ENCODE measurements at regions of chr7 and their contacts with region 1.

Region 1: GRCh38 chr7:77674878-77675277 is 21.4 kb upstream of the RSBN1L start:
- DNase-seq: peak in 1 of 2 experiments; percentile 29
- ATAC-seq: peak; percentile 64 to 72
- H3K4me3 ChIP-seq: no peak overlapping the region
- H3K27ac ChIP-seq: no peak overlapping the region
- H3K4me1 ChIP-seq: peaks cover 10% of the 10 kb centered on the region
- CTCF ChIP-seq: no peak
- EP300 ChIP-seq: no peak
- POLR2A ChIP-seq: no peak
- RAD21 ChIP-seq: no peak

Region 2: GRCh38 chr7:77600952-77601351 is 73.9 kb before region 1 on chr7:
- CTCF ChIA-PET with region 1: no interaction called
- POLR2A ChIA-PET with region 1: no interaction called
- DNase-seq: no peak
- ATAC-seq: no peak
- H3K4me3 ChIP-seq: no peak overlapping the region
- H3K27ac ChIP-seq: no peak overlapping the region
- H3K4me1 ChIP-seq: peaks cover 12% of the 10 kb centered on the region; the same call in 2 of the 3 replicates
- CTCF ChIP-seq: no peak
- EP300 ChIP-seq: no peak
- POLR2A ChIP-seq: no peak
- RAD21 ChIP-seq: no peak

Region 3: DNA sequence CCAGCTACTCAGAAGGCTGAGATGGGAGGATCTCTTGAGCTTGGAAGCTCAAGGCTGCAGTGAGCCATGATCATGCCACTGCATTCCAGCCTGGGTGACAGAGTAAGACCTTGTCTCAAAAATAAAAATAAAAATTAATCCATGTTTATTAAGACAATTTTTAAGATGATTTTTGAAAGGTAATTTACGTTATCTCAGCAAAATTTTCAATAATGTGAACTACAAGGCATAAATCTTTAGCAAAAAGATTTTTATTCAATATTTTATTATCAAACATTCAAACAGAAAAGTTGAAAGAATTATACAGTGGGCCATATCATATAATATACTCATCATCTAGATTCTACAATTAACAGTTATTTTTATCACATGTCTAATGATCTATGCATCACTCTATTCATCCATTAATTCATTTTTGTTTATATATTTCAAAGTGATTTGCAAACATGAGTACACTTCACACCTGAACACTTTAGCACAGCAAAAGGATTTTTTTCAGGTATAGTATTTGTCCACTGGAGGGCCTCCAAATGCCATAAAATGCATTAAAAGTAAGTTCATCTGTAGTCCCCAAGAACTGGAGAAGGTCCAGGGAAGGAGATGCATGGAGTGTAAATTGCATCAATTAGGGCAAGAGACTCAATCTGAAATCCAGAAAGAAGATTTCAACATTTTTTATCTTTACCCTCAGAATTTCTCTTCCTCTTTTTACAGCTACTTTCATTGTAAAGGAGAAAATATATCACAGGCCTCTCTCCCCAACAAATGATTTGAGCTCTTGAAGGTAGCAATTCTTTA is 17.3 kb before region 1 on chr7:
- CTCF ChIA-PET with region 1: interaction called, 14 read pairs
- POLR2A ChIA-PET with region 1: no interaction called
- DNase-seq: peak; percentile 32 to 46
- ATAC-seq: peak; percentile 59 to 77; a peak in 4 of 6 replicates
- H3K4me3 ChIP-seq: no peak overlapping the region
- H3K27ac ChIP-seq: no peak overlapping the region
- H3K4me1 ChIP-seq: no peaks in the 10 kb centered on the region
- CTCF ChIP-seq: peak; percentile 76
- EP300 ChIP-seq: no peak
- POLR2A ChIP-seq: no peak
- RAD21 ChIP-seq: peak; percentile 78 to 81

Region 4: DNA sequence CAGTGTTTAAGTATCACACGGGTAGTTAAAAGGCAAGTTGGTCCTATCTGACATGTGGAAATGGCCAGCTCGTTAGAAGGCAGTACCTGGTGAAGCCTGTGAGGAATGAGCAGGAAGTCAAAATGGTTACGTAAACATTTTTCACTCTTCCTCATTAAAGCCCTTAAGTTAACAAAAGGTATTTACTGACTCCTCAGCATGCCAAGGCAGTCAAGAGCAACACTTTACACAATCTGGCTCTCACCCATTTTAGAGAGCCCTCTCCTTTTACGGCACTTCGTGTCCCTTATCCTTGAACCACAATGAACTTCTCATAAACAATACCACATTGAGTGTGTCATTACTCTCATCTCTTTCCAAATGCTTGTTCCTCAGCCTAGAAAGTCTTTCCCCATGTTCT is 10.4 kb after region 1 on chr7:
- CTCF ChIA-PET with region 1: no interaction called
- POLR2A ChIA-PET with region 1: no interaction called
- DNase-seq: no peak
- ATAC-seq: no peak
- H3K4me3 ChIP-seq: no peak overlapping the region
- H3K27ac ChIP-seq: no peak overlapping the region
- H3K4me1 ChIP-seq: peaks cover 7% of the 10 kb centered on the region; the same call in 2 of the 3 replicates
- CTCF ChIP-seq: no peak
- EP300 ChIP-seq: no peak
- POLR2A ChIP-seq: no peak
- RAD21 ChIP-seq: no peak

Region 5: GRCh38 chr7:78041423-78041822 is 366.5 kb after region 1 on chr7:
- CTCF ChIA-PET with region 1: no interaction called
- POLR2A ChIA-PET with region 1: no interaction called
- DNase-seq: no peak
- ATAC-seq: no peak
- H3K4me3 ChIP-seq: no peak overlapping the region
- H3K27ac ChIP-seq: no peak overlapping the region
- H3K4me1 ChIP-seq: no peaks in the 10 kb centered on the region
- CTCF ChIP-seq: no peak
- EP300 ChIP-seq: no peak
- POLR2A ChIP-seq: no peak
- RAD21 ChIP-seq: no peak